MCF 10A (cell line): ENCODE measurements at regions of chr20 and their contacts with region 1.

Region 1: GRCh38 chr20:9616833-9617489 is 102.6 kb downstream of the LAMP5 start:
- DNase-seq: peak; percentile 72
- H3K4me3 Mint-ChIP-seq: no peak overlapping the region
- H3K27ac Mint-ChIP-seq: no peak overlapping the region
- H3K4me1 Mint-ChIP-seq: no peaks in the 10 kb centered on the region
- H3K27me3 Mint-ChIP-seq: peaks cover 28% of the 10 kb centered on the region
- CTCF ChIP-seq: peak; percentile 93

Region 2: DNA sequence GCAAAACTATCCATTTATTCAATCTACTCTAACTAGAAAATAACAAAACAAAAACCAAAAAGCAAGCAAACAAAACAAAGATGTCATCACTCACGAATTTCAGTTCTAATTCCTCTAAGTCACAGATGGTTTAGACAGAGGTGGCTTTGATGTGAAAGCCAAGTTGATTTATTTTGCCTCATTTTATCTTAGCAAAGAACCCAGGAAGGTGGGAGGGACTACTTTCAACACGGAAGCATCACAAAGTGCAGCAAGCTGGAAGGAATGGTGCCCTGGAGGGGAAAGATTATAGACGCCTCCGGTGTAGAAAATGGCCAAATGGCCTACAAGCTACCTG is 14.1 kb before region 1 on chr20:
- CTCF ChIA-PET with region 1: interaction called, 33 read pairs
- POLR2A ChIA-PET with region 1: no interaction called
- intact Hi-C with region 1: no loop called
- DNase-seq: no peak
- H3K4me3 Mint-ChIP-seq: no peak overlapping the region
- H3K27ac Mint-ChIP-seq: no peak overlapping the region
- H3K4me1 Mint-ChIP-seq: no peaks in the 10 kb centered on the region
- H3K27me3 Mint-ChIP-seq: no peaks in the 10 kb centered on the region
- CTCF ChIP-seq: no peak

Region 3: GRCh38 chr20:9723501-9724202 is 106.7 kb after region 1 on chr20:
- CTCF ChIA-PET with region 1: no interaction called
- POLR2A ChIA-PET with region 1: no interaction called
- intact Hi-C with region 1: no loop called
- DNase-seq: no peak
- H3K4me3 Mint-ChIP-seq: no peak overlapping the region
- H3K27ac Mint-ChIP-seq: no peak overlapping the region
- H3K4me1 Mint-ChIP-seq: no peaks in the 10 kb centered on the region
- H3K27me3 Mint-ChIP-seq: no peaks in the 10 kb centered on the region
- CTCF ChIP-seq: no peak

Region 4: DNA sequence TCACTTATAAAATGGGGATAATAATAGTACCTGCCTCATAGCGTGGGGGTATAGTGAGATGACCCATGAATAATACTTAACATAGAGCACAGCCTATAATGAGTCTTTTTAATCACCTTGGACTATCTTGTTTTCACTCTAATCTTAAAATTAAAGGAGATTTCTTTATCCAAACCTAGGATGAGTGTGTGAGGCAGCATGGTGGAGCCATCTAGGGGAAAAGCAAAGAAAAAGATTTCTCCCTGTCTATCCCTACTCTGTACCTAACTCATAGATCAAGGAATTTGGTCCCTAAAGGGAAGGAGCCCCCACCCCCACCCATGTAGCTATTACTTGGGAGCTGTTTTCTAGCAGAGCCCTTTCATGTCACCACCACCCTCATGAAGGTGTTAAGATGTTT is 267.1 kb after region 1 on chr20:
- CTCF ChIA-PET with region 1: interaction called, 20 read pairs
- POLR2A ChIA-PET with region 1: no interaction called
- intact Hi-C with region 1: loop called (anchors 1 kb)
- DNase-seq: peak; percentile 13
- H3K4me3 Mint-ChIP-seq: no peak overlapping the region
- H3K27ac Mint-ChIP-seq: no peak overlapping the region
- H3K4me1 Mint-ChIP-seq: no peaks in the 10 kb centered on the region
- H3K27me3 Mint-ChIP-seq: peaks cover 22% of the 10 kb centered on the region
- CTCF ChIP-seq: no peak

Region 5: DNA sequence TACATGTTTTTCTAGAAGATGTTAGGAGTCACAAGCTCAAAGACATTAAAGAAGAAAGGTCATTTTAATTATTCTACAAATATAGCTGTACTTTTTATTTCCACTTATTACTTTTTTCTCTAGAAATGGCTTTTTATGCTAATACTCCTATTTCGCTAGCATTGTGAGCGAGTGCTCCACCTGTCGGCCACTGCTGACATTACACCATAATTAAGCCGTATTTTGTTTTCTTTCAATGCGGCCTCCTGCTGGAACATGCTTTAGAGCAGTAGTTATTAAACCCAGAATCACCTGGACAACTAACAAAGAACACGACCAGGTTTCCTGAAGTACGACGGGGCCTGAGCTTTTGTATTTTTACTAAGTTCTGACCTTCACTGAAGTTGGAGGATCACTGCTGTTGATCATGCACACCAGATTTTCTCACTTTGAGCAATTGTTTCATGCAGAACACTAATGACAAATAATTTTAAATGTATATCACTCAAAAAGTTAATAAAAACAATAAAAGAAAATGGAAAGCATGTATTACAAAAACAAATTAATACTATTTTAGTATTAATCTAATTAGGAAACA is 296.0 kb after region 1 on chr20:
- CTCF ChIA-PET with region 1: interaction called, 130 read pairs
- POLR2A ChIA-PET with region 1: no interaction called
- intact Hi-C with region 1: loop called (anchors 1 kb)
- DNase-seq: peak; percentile 56
- H3K4me3 Mint-ChIP-seq: no peak overlapping the region
- H3K27ac Mint-ChIP-seq: no peak overlapping the region
- H3K4me1 Mint-ChIP-seq: no peaks in the 10 kb centered on the region
- H3K27me3 Mint-ChIP-seq: peaks cover 18% of the 10 kb centered on the region
- CTCF ChIP-seq: peak; percentile 64

Region 6: DNA sequence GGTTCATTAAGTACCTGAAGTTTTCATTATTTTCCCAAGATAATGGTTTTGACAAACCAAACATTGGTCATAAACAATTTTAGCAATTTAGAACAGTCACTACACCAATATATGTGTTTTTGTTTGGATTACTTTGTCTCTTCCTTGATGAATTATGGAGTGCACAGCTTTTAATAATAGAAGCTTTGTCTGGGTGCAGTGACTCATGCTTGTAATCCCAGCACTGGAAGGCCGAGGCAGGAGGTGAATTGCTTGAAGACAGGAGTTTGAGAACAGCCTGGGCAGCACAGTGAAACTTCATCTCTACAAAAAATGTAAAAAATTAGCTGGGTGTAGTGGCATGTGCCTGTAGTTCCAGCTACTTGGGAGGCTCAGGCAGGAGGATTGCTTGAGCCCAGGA is 328.4 kb after region 1 on chr20:
- CTCF ChIA-PET with region 1: interaction called, 10 read pairs
- POLR2A ChIA-PET with region 1: no interaction called
- intact Hi-C with region 1: no loop called
- DNase-seq: peak; percentile 43
- H3K4me3 Mint-ChIP-seq: no peak overlapping the region
- H3K27ac Mint-ChIP-seq: no peak overlapping the region
- H3K4me1 Mint-ChIP-seq: no peaks in the 10 kb centered on the region
- H3K27me3 Mint-ChIP-seq: no peaks in the 10 kb centered on the region
- CTCF ChIP-seq: no peak

Region 7: GRCh38 chr20:11544029-11544678 is 1927.2 kb after region 1 on chr20:
- CTCF ChIA-PET with region 1: interaction called, 7 read pairs
- POLR2A ChIA-PET with region 1: no interaction called
- intact Hi-C with region 1: loop called (anchors 10 kb)
- DNase-seq: peak; percentile 75
- H3K4me3 Mint-ChIP-seq: no peak overlapping the region
- H3K27ac Mint-ChIP-seq: no peak overlapping the region
- H3K4me1 Mint-ChIP-seq: no peaks in the 10 kb centered on the region
- H3K27me3 Mint-ChIP-seq: no peaks in the 10 kb centered on the region
- CTCF ChIP-seq: peak; percentile 73